ENCODE measurements at regions of chr4 and their contacts with region 1.

Region 1: DNA sequence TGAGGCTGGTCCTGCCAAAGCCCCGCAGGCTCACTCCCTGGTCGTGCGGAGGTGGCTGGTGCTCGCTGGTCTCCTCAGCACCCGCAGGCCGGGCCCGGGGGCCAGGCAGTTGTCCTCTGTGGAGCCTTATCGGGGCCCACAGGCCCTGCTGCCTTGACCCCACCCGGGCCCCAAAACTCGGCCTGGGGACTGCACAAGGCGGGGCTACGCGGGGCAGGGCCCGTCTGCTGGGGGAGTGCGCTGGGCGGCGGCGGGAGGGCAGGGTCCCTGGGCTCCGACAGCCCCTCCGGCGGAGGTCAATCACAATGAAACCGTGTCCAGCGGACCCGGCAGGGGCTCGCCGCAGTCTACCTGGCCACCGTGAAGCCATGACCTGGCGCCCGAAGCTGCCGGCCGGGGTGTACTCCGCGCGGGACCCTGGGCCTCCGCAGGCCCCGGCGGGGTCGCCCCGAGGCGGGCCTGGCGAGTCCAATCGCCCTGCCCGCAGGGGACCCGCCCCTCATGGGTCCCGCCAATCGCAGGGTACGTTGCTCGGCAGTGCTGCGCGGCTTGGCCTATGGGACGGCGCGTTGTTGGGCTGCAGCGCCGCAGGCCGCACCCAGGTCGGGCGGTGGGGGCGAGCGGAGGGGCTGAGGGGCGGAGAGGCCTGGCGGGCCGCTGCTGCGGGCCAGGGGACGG is at the start of gene ADD1:
- DNase-seq: peak; percentile 89 to 94
- ATAC-seq: peak; percentile 98 to 99 (median 99)
- H3K4me3 ChIP-seq: peak within 1 kb of the TSS; percentile 67 to 94 (median 86)
- H3K27ac ChIP-seq: peak within 1 kb of the TSS; percentile 91 to 100 (median 96)
- H3K4me1 ChIP-seq: peaks cover 2 to 64% (median 49%) of the 10 kb centered on the region in 9 donors
- H3K27me3 ChIP-seq: no peaks in the 10 kb centered on the region
- CTCF ChIP-seq: no peak
- total RNA-seq, gene ADD1: 188 to 289 (median 214) TPM

Region 2: GRCh38 chr4:2534935-2535309 is 308.5 kb before region 1 on chr4:
- intact Hi-C with region 1: no loop called
- DNase-seq: no peak
- ATAC-seq: no peak
- H3K4me3 ChIP-seq: peak overlapping the region; percentile 56 to 98 (median 88)
- H3K27ac ChIP-seq: peak overlapping the region in 9 of 10 donors; percentile 87 to 98 (median 98)
- H3K4me1 ChIP-seq: peaks cover 10 to 38% (median 32%) of the 10 kb centered on the region in 9 donors
- H3K27me3 ChIP-seq: no peaks in the 10 kb centered on the region
- CTCF ChIP-seq: no peak

Region 3: GRCh38 chr4:2750693-2751605 is 92.5 kb before region 1 on chr4:
- intact Hi-C with region 1: no loop called
- DNase-seq: no peak
- ATAC-seq: peak in 5 of 8 donors; percentile 5 to 61 (median 30)
- H3K4me3 ChIP-seq: no peak overlapping the region
- H3K27ac ChIP-seq: peak overlapping the region in 6 of 10 donors; percentile 14 to 62 (median 42)
- H3K4me1 ChIP-seq: peaks cover 2 to 55% (median 33%) of the 10 kb centered on the region in 9 donors
- H3K27me3 ChIP-seq: no peaks in the 10 kb centered on the region
- CTCF ChIP-seq: no peak

Region 4: DNA sequence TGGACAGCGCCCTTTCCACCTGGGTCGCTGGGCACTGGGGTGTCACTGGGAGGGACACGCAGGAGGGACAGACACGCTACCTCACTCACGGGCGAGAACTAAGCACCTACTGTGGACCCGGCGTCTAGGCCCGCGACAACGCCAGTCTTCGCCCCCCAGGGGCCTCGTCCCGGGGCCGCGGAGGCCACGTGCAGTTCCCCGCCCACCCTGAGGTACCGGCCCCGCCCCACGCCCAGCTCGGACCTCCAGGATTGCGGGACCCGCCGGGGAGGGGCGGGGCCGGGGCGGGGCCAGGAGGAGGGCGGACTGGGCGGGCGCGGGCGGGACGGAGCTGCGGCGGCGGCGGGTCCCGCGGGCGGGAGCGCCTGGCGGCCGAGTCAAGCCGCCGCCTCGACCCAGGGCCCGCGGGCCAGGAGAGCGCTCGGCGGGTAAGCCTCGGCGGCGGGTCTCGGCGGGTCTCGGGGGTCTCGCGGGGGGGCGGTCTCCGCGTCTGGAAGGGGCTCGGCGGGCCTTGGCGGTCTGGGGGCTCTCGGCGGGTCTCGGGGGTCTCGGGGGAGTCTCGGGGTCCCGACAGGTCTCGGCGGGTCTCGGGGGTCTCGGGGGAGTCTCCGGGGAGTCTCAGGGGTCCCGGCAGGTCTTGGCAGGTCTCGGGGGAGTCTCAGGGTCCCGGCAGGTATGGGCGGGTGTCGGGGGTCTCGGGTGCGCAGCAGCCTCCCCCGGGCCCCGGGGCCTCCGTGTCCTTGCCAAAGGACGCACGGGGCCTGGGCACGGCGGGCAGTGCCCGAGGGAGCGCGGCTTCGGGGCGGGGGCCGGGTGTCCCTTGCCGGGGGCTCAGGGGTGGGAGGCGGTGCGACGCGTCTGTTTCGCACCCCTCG is 50.5 kb before region 1 on chr4 and contains the start of gene SH3BP2:
- intact Hi-C with region 1: loop called in 3 of 10 experiments (anchors 5 kb)
- DNase-seq: peak; percentile 87 to 93
- ATAC-seq: peak; percentile 47 to 85 (median 69)
- H3K4me3 ChIP-seq: peak within 1 kb of the TSS; percentile 56 to 86 (median 79)
- H3K27ac ChIP-seq: peak within 1 kb of the TSS; percentile 58 to 96 (median 86)
- H3K4me1 ChIP-seq: peaks cover 34 to 79% (median 69%) of the 10 kb centered on the region in 9 donors
- H3K27me3 ChIP-seq: no peaks in the 10 kb centered on the region
- CTCF ChIP-seq: no peak
- total RNA-seq, gene SH3BP2: 10.4 to 36.9 (median 16.4) TPM

Region 5: DNA sequence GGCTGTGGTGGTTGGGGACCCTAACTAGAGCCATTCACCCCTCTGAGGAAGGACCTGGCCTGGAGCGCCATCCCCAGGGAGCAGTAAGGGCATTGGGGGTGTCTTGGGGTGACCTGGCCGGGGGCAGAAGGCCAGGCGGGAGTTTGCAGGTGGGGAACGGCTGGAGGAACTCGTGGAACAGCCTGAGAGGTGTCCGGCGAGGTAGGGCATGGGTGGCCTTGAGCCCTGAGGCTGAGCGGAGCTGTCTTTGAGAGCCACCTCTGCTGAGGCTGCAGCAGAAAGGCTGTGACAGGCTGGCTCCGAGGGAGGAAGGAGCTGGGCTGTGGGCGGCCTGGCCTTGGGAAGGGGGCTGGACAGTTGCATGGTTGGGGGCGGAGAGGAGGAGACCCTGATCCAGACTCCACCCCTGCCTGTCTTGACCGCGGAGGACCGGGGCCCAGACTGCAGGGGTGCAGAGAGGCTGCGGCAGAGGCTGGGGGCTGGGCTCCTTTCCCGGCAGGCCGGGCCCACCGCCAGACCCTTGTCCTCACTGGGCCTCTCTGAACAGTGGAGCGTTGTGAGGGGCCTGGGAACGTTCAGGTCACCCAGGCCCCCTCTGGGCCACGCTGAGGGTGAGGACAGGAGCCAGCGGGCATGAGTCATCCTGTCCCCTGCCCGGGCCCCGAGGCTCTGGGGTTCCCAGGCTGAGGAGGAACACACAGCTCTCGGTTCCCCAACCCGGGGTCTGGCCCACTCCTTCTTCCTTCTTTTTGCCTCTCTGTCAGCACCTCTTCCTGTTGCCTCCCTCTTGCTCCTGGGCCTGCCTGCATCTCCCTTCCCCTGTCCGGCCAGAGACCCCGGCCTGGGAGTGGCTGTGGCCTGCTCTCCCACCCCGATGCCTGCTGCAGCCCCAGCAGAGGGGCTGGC is 42.5 kb before region 1 on chr4:
- intact Hi-C with region 1: loop called in 3 of 10 experiments (anchors 5 kb)
- DNase-seq: peak; percentile 82 to 89
- ATAC-seq: peak; percentile 63 to 78 (median 74)
- H3K4me3 ChIP-seq: peak overlapping the region in 9 of 10 donors; percentile 8 to 57 (median 33)
- H3K27ac ChIP-seq: peak overlapping the region; percentile 52 to 96 (median 88)
- H3K4me1 ChIP-seq: peaks cover 61 to 99% (median 96%) of the 10 kb centered on the region in 9 donors
- H3K27me3 ChIP-seq: no peaks in the 10 kb centered on the region
- CTCF ChIP-seq: no peak

Region 6: DNA sequence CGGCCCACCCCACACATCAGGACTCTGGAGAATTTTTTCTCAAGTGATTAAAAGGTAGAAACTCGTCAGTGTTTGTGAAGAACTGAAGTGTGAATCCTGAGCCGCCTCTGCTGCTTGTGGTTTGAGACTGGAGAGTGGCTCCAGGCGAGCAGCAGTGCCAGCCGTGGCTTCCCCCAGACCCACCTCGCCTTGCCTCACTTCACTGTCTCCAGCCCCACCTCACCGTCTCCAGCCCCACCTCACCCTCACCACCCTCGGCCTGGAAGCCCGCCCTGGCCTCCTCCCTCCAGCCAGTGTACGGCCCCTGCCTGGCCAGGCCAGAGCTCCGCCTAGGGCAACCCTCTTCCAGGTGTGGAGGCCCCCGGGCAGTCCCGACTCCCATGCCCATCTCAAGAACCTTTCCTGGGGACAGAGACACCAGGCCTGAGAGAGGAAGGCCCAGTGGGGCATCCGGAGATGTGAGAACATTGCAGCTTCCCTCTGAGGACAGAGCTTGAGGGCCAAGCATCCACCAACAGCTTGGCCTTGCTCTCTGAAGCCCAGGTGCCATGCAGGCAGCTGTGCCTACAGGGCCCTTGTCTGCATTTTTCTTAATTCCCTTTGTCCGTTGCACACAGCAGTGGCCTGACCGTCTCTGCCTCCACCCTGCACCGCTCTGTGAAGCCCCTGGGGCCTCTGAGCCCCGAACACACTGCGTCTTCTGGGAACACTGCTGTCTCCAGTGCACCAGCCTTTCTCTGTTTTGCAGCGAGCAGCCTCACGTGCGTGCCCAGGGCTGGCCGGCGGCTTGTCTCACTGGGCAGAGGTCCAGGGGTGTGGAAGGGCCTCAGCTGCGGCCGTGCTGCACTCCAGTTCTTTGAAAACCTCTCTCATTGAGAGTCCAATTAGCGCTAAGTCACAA is 36.8 kb before region 1 on chr4:
- intact Hi-C with region 1: loop called in 1 of 10 experiments (anchors 5 kb)
- DNase-seq: peak; percentile 77 to 80
- ATAC-seq: peak; percentile 42 to 64 (median 55)
- H3K4me3 ChIP-seq: peak overlapping the region in 2 of 10 donors; percentile 8 to 15
- H3K27ac ChIP-seq: peak overlapping the region; percentile 69 to 91 (median 80)
- H3K4me1 ChIP-seq: peaks cover 61 to 95% (median 88%) of the 10 kb centered on the region in 9 donors
- H3K27me3 ChIP-seq: no peaks in the 10 kb centered on the region
- CTCF ChIP-seq: no peak

Region 7: GRCh38 chr4:2934813-2935761 is 91.7 kb after region 1 on chr4:
- intact Hi-C with region 1: loop called in 2 of 10 experiments (anchors 5 to 10 kb)
- DNase-seq: peak; percentile 95 to 98
- ATAC-seq: peak; percentile 80 to 90 (median 84)
- H3K4me3 ChIP-seq: peak overlapping the region; percentile 54 to 100 (median 94)
- H3K27ac ChIP-seq: peak overlapping the region; percentile 74 to 95 (median 90)
- H3K4me1 ChIP-seq: peaks cover 7 to 61% (median 57%) of the 10 kb centered on the region in 9 donors
- H3K27me3 ChIP-seq: no peaks in the 10 kb centered on the region
- CTCF ChIP-seq: peak in 2 of 9 donors; percentile 6 to 13

Measured in heart right ventricle (tissue), 16 donors.